ENCODE measurements at regions of chr7 and their contacts with region 1.

Region 1: GRCh38 chr7:140924019-140924820 is 509 bp downstream of the BRAF start:
- DNase-seq: peak; percentile 86 to 92
- ATAC-seq: peak; percentile 79 to 90 (median 79)
- H3K4me3 ChIP-seq: peak overlapping the region; percentile 71
- H3K4me3 Mint-ChIP-seq: no peak overlapping the region
- H3K27ac ChIP-seq: peak overlapping the region; percentile 94
- H3K27ac Mint-ChIP-seq: no peak overlapping the region
- H3K4me1 ChIP-seq: peaks cover 6% of the 10 kb centered on the region
- H3K4me1 Mint-ChIP-seq: peaks cover 16 to 17% of the 10 kb centered on the region in 2 donors
- H3K27me3 ChIP-seq: no peaks in the 10 kb centered on the region
- H3K27me3 Mint-ChIP-seq: peaks cover 2 to 4% of the 10 kb centered on the region in 2 donors
- CTCF ChIP-seq: no peak

Region 2: DNA sequence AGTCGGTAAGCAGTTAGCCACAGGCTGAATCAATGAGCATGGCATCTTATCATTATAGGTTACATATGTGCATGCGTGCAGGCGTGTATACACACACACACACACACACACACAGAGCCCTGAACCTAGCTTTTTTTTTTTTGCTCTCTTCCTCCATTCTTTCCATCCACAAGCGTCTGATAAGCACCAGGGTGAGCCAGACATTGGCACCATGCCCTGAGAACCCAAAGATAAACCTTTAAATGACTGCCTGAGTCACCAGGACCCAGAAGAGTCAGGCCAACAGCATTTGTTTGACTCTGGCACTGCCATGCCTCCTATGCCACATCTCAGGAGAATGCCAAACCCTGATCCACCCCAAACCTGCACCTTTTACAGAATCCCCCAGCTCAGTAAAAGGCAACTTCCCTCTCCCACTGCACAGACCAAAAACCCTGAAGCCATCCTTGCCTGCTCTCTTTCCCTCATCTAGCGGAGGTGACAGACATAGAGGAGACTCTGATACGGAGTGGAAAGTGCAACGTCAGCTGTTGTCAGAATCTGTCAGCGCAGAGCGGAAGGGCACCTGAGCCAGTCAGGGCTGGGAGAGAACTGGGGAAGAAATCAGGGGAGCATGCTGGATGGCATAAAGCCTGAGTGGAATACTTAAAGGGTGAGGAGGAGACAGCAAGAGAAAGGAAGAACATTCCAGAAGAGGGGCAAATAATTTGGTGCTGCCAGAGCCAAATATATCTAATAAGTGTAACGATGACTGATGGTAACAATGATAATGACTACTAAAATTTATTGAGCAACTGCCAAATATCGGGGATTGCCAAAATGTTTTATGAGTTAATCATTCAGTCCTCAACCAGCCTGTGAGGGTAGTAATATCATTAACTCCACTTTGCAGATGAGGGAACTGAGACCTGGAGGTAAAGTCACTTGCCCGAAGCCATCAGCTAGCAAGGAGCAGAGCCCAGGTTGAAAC is 864.7 kb before region 1 on chr7:
- intact Hi-C with region 1: no loop called
- DNase-seq: peak in 1 of 2 donors; percentile 43
- ATAC-seq: no peak
- H3K4me3 ChIP-seq: no peak overlapping the region
- H3K4me3 Mint-ChIP-seq: peak overlapping the region; percentile 86
- H3K27ac ChIP-seq: no peak overlapping the region
- H3K27ac Mint-ChIP-seq: peak overlapping the region; percentile 78 to 80
- H3K4me1 ChIP-seq: peaks cover 39% of the 10 kb centered on the region
- H3K4me1 Mint-ChIP-seq: peaks cover 43 to 58% of the 10 kb centered on the region in 2 donors
- H3K27me3 ChIP-seq: no peaks in the 10 kb centered on the region
- H3K27me3 Mint-ChIP-seq: no peaks in the 10 kb centered on the region
- CTCF ChIP-seq: no peak

Region 3: DNA sequence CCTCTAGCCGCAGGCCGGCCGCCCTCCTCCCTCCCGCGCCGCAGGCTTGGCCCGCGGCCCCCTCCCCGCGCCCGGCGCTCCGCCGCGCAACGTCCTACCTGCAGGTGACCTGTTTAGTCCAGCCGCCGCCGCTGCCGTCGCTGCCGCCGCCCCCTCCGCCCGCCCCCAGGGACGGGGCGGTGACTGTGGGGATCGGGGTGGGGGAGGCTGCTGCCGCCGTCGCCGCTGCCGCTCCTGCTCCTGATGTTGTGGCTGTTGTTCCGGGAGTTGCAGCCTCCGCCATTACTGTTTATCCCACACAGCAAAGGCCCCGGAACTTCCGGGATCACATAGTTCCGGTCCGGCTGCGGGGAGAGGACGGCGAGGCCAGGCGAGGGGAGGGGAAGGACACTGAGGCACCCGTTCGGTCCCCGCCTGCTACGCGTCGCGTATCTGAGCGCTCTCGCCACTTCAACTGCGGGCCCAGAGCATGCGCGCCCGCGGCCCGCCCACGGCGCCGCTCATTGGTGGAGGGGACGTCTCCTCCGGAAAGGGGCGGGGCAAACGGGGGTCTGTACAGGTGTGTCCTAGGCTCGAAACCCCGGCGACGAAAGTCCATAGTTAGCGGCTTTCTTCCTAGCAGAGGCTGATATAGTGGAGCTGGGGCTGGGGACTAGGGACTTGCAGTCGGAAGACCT is 445.0 kb before region 1 on chr7 and contains the start of gene MKRN1:
- intact Hi-C with region 1: loop called (anchors 5 kb)
- DNase-seq: peak; percentile 83 to 95
- ATAC-seq: peak; percentile 84 to 93 (median 91)
- H3K4me3 ChIP-seq: peak within 1 kb of the TSS; percentile 86
- H3K4me3 Mint-ChIP-seq: peak within 1 kb of the TSS; percentile 99
- H3K27ac ChIP-seq: peak within 1 kb of the TSS; percentile 75
- H3K27ac Mint-ChIP-seq: peak within 1 kb of the TSS; percentile 93
- H3K4me1 ChIP-seq: peaks cover 26% of the 10 kb centered on the region
- H3K4me1 Mint-ChIP-seq: peaks cover 30 to 34% of the 10 kb centered on the region in 2 donors
- H3K27me3 ChIP-seq: no peaks in the 10 kb centered on the region
- H3K27me3 Mint-ChIP-seq: no peaks in the 10 kb centered on the region
- CTCF ChIP-seq: no peak
- total RNA-seq, gene MKRN1: 119 to 146 (median 136) TPM

Region 4: DNA sequence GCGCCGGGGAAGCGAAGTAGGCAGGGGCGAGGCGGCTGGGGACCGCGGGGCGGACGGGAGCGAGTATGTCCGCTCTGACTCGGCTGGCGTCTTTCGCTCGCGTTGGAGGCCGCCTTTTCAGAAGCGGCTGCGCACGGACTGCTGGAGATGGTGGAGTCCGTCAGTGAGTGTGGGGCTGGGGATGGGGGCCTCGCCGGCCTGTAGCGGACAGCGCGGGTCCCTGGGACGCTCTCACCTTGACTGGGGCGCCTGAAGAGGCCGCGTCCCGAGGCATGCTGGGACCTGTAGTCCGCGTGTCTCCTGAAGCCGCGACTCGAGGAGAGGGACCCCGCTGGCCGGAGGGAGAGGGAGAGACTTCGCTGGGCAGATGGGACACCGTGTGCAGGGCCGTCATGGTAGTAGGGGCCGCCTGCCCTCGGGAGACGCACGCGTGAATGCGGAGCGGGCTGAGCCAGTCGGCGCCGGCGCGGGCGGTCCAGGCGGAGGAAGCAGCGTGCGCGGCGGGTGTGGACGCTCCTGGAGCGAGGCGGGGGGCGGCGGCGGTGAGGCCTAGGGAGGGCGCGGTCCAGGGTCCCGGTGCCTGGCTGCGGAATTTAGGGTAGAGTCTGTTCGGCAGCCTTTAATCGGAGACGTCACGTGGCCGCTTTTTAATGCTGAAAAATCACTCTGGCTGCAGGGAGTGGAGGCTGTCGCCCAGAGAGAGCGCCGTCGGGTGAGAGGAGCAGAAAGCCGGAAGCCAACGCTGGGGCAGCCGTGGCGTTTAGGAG is 227.4 kb before region 1 on chr7 and contains the start of gene NDUFB2:
- intact Hi-C with region 1: loop called (anchors 10 kb)
- DNase-seq: peak; percentile 83 to 89
- ATAC-seq: peak; percentile 85 to 93 (median 87)
- H3K4me3 ChIP-seq: peak within 1 kb of the TSS; percentile 99
- H3K4me3 Mint-ChIP-seq: peak within 1 kb of the TSS; percentile 99
- H3K27ac ChIP-seq: peak within 1 kb of the TSS; percentile 92
- H3K27ac Mint-ChIP-seq: peak within 1 kb of the TSS; percentile 96 to 98
- H3K4me1 ChIP-seq: peaks cover 23% of the 10 kb centered on the region
- H3K4me1 Mint-ChIP-seq: peaks cover 40% of the 10 kb centered on the region in 2 donors
- H3K27me3 ChIP-seq: no peaks in the 10 kb centered on the region
- H3K27me3 Mint-ChIP-seq: no peaks in the 10 kb centered on the region
- CTCF ChIP-seq: no peak
- total RNA-seq, gene NDUFB2: 152 to 177 (median 177) TPM

Region 5: GRCh38 chr7:140889645-140890044 is 34.6 kb before region 1 on chr7:
- intact Hi-C with region 1: loop called (anchors 5 kb)
- DNase-seq: no peak
- ATAC-seq: peak in 1 of 3 donors; percentile 20
- H3K4me3 ChIP-seq: no peak overlapping the region
- H3K4me3 Mint-ChIP-seq: no peak overlapping the region
- H3K27ac ChIP-seq: no peak overlapping the region
- H3K27ac Mint-ChIP-seq: no peak overlapping the region
- H3K4me1 ChIP-seq: peaks cover 10% of the 10 kb centered on the region
- H3K4me1 Mint-ChIP-seq: peaks cover 54 to 59% of the 10 kb centered on the region in 2 donors
- H3K27me3 ChIP-seq: no peaks in the 10 kb centered on the region
- H3K27me3 Mint-ChIP-seq: no peaks in the 10 kb centered on the region
- CTCF ChIP-seq: no peak

Region 6: DNA sequence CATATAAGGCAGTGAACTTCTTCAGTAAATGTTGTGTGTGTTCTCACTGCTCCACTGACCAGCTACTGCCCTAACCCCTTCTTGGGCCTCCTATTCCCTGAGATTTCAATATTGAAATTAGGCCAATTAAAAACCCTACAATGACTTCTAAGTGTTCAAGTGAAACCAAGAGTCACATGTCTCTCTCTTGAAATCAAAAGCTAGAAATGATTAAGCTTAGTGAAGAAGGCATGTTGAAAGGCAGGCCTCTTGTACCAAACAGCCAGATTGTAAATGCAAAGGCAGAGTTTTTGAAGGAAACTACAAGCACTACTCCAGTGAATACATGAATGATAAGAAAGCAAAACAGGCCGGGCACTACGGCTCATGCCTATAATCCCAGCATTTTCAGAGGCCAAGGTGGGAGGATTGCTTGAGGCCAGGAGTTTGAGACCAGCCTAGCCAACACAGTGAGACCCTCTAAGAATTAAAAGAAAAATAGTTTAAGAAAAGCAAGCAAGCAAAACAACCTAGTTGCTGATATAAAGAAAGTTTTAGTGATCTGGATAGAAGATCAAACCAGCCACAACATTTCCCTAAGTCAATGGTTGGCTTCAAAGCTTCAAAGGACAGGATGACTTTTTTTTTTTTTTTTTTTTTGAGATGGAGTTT is 21.8 kb before region 1 on chr7:
- intact Hi-C with region 1: no loop called
- DNase-seq: peak in 1 of 2 donors; percentile 53
- ATAC-seq: no peak
- H3K4me3 ChIP-seq: no peak overlapping the region
- H3K4me3 Mint-ChIP-seq: no peak overlapping the region
- H3K27ac ChIP-seq: no peak overlapping the region
- H3K27ac Mint-ChIP-seq: no peak overlapping the region
- H3K4me1 ChIP-seq: no peaks in the 10 kb centered on the region
- H3K4me1 Mint-ChIP-seq: peaks cover 47 to 54% of the 10 kb centered on the region in 2 donors
- H3K27me3 ChIP-seq: no peaks in the 10 kb centered on the region
- H3K27me3 Mint-ChIP-seq: no peaks in the 10 kb centered on the region
- CTCF ChIP-seq: no peak

Region 7: GRCh38 chr7:140983802-140984201 is 59.6 kb after region 1 on chr7:
- intact Hi-C with region 1: loop called (anchors 2 kb)
- DNase-seq: peak in 1 of 2 donors; percentile 33
- ATAC-seq: no peak
- H3K4me3 ChIP-seq: no peak overlapping the region
- H3K4me3 Mint-ChIP-seq: no peak overlapping the region
- H3K27ac ChIP-seq: no peak overlapping the region
- H3K27ac Mint-ChIP-seq: no peak overlapping the region
- H3K4me1 ChIP-seq: peaks cover 4% of the 10 kb centered on the region
- H3K4me1 Mint-ChIP-seq: peaks cover 18 to 24% of the 10 kb centered on the region in 2 donors
- H3K27me3 ChIP-seq: no peaks in the 10 kb centered on the region
- H3K27me3 Mint-ChIP-seq: no peaks in the 10 kb centered on the region
- CTCF ChIP-seq: peak; percentile 38

Region 8: DNA sequence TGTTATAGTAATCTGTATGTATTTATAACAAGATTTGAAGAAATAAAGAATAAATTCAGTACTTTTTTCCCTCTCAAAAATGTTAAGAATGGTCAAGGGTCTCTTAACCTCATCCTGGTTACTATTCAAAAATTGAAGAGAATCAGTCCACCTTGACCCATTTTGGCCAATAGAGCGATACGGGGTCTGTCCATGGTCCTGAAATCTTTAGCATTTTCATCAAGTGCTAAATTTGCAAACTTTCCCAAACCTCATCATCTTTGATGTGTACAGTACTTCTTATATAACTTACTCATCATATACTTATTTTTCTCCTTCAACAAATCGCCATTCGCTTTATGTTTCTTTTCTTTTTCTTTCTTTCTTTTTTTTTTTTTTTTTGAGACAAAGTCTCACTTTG is 173.2 kb after region 1 on chr7:
- intact Hi-C with region 1: no loop called
- DNase-seq: peak in 1 of 2 donors; percentile 12
- ATAC-seq: no peak
- H3K4me3 ChIP-seq: no peak overlapping the region
- H3K4me3 Mint-ChIP-seq: no peak overlapping the region
- H3K27ac ChIP-seq: no peak overlapping the region
- H3K27ac Mint-ChIP-seq: no peak overlapping the region
- H3K4me1 ChIP-seq: no peaks in the 10 kb centered on the region
- H3K4me1 Mint-ChIP-seq: no peaks in the 10 kb centered on the region
- H3K27me3 ChIP-seq: no peaks in the 10 kb centered on the region
- H3K27me3 Mint-ChIP-seq: peaks cover 7 to 8% of the 10 kb centered on the region in 2 donors
- CTCF ChIP-seq: no peak

Measured in natural killer cell (primary cell).